ENCODE measurements at regions of chr2 and their contacts with region 1.

Region 1: GRCh38 chr2:191617575-191617974 is 60.4 kb upstream of the NABP1 start:
- DNase-seq: peak; percentile 78 to 89 (median 85)
- H3K4me3 ChIP-seq: no peak overlapping the region
- H3K4me3 Mint-ChIP-seq: peak overlapping the region; percentile 5 to 83 (median 34)
- H3K27ac ChIP-seq: peak overlapping the region; percentile 82
- H3K27ac Mint-ChIP-seq: peak overlapping the region; percentile 88 to 97 (median 93)
- H3K4me1 ChIP-seq: peaks cover 47% of the 10 kb centered on the region
- H3K4me1 Mint-ChIP-seq: peaks cover 35 to 52% (median 45%) of the 10 kb centered on the region in 4 donors
- H3K27me3 ChIP-seq: no peaks in the 10 kb centered on the region
- H3K27me3 Mint-ChIP-seq: no peaks in the 10 kb centered on the region

Region 2: GRCh38 chr2:191566344-191566743 is 51.2 kb before region 1 on chr2:
- CTCF ChIA-PET with region 1: interaction called, 8 read pairs
- POLR2A ChIA-PET with region 1: interaction called, 5 read pairs
- intact Hi-C with region 1: loop called (anchors 2 kb)
- DNase-seq: peak; percentile 47 to 63 (median 52)
- H3K4me3 ChIP-seq: no peak overlapping the region
- H3K4me3 Mint-ChIP-seq: no peak overlapping the region
- H3K27ac ChIP-seq: no peak overlapping the region
- H3K27ac Mint-ChIP-seq: no peak overlapping the region
- H3K4me1 ChIP-seq: peaks cover 19% of the 10 kb centered on the region
- H3K4me1 Mint-ChIP-seq: peaks cover 15 to 33% (median 25%) of the 10 kb centered on the region in 4 donors
- H3K27me3 ChIP-seq: peaks cover 3% of the 10 kb centered on the region
- H3K27me3 Mint-ChIP-seq: peaks cover 11 to 21% of the 10 kb centered on the region in 2 donors

Region 3: DNA sequence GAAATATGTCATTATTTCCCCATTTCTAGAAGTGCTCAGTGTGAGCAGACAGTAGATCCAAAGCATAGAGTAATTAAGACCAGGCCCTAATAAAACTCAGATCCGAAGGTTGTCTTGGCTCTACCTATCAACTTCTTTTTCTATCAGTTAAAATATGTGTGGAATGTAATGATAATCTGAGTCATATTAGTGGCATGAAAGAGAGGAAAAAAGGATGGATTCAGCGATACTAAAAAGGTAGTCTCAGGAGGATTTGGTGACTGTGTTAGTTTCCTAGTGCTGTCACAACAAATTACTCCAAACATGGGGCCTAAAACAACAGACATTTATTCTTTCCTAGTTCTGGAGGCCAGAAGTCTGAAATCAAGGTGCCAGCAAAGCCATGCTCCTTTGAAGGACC is 43.3 kb before region 1 on chr2:
- CTCF ChIA-PET with region 1: interaction called, 11 read pairs
- POLR2A ChIA-PET with region 1: interaction called, 5 read pairs
- intact Hi-C with region 1: loop called (anchors 2 kb)
- DNase-seq: no peak
- H3K4me3 ChIP-seq: no peak overlapping the region
- H3K4me3 Mint-ChIP-seq: no peak overlapping the region
- H3K27ac ChIP-seq: no peak overlapping the region
- H3K27ac Mint-ChIP-seq: no peak overlapping the region
- H3K4me1 ChIP-seq: peaks cover 21% of the 10 kb centered on the region
- H3K4me1 Mint-ChIP-seq: peaks cover 15 to 34% (median 23%) of the 10 kb centered on the region in 4 donors
- H3K27me3 ChIP-seq: no peaks in the 10 kb centered on the region
- H3K27me3 Mint-ChIP-seq: no peaks in the 10 kb centered on the region

Region 4: GRCh38 chr2:191637182-191638078 is 19.9 kb after region 1 on chr2:
- CTCF ChIA-PET with region 1: interaction called, 7 read pairs
- POLR2A ChIA-PET with region 1: interaction called, 76 read pairs
- intact Hi-C with region 1: loop called (anchors 2 kb)
- DNase-seq: peak; percentile 33 to 52 (median 39)
- H3K4me3 ChIP-seq: peak overlapping the region; percentile 0 to 7
- H3K4me3 Mint-ChIP-seq: peak overlapping the region; percentile 51 to 80 (median 70)
- H3K27ac ChIP-seq: peak overlapping the region; percentile 36
- H3K27ac Mint-ChIP-seq: peak overlapping the region; percentile 84 to 92 (median 86)
- H3K4me1 ChIP-seq: peaks cover 54% of the 10 kb centered on the region
- H3K4me1 Mint-ChIP-seq: peaks cover 48 to 68% (median 53%) of the 10 kb centered on the region in 4 donors
- H3K27me3 ChIP-seq: no peaks in the 10 kb centered on the region
- H3K27me3 Mint-ChIP-seq: no peaks in the 10 kb centered on the region

Region 5: DNA sequence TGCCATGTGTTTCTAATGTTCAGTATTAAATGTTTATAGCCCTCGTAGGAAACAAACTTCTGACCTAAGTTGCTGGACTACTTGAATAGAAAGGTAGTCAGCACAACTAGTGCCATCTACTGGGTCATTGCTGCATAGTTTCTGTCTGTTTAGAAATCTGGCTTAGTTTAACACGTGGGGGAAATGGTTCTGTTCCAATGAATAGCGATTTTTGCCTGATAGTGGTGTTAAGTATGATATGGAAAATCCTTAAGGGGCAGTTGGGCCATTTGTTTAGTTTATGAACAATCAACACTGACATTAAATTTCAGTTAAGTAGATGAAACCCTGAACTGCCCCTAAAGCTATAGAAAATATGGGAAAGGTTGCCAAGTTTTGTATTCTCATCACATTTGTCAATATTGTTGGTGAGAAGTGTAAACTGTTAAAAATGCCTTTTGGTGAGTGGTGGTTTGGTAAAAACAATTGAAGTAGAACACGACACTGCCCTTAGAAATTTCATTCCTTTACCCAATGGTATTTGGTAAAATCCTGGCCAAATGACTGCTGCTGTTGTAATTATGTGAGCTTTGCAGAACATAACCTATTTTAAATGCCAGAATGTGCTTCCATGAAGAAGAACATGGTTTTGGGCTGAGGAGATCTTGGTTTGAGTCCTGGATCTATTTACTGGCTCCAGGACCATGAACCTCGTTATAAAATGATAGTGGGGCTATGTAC is 73.6 kb after region 1 on chr2:
- CTCF ChIA-PET with region 1: interaction called, 8 read pairs
- POLR2A ChIA-PET with region 1: interaction called, 602 read pairs
- intact Hi-C with region 1: loop called (anchors 1 kb)
- DNase-seq: peak; percentile 61 to 67 (median 65)
- H3K4me3 ChIP-seq: no peak overlapping the region
- H3K4me3 Mint-ChIP-seq: no peak overlapping the region
- H3K27ac ChIP-seq: no peak overlapping the region
- H3K27ac Mint-ChIP-seq: peak overlapping the region; percentile 40 to 90 (median 73)
- H3K4me1 ChIP-seq: peaks cover 30% of the 10 kb centered on the region
- H3K4me1 Mint-ChIP-seq: peaks cover 20 to 46% (median 32%) of the 10 kb centered on the region in 4 donors
- H3K27me3 ChIP-seq: no peaks in the 10 kb centered on the region
- H3K27me3 Mint-ChIP-seq: no peaks in the 10 kb centered on the region

Region 6: DNA sequence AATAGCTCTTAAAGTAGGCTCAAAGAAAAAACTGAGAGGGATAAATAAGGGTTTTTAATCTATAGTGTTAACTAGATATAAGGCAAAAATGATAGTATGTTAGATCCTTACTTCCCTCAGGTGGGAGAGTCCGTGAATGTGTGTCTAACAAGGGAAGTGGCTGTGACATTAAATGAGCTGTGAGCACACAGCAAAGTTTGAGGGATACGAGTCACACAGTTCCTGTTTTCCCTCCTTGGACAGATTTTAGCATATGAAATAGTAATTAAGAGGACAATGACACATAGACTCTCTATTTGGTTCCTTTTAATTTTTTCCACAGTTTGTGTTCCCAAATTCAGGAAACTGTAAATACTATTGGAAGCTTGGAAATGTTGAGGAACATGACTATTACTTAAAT is 377.7 kb after region 1 on chr2:
- CTCF ChIA-PET with region 1: no interaction called
- POLR2A ChIA-PET with region 1: no interaction called
- intact Hi-C with region 1: no loop called
- DNase-seq: no peak
- H3K4me3 ChIP-seq: no peak overlapping the region
- H3K4me3 Mint-ChIP-seq: no peak overlapping the region
- H3K27ac ChIP-seq: no peak overlapping the region
- H3K27ac Mint-ChIP-seq: no peak overlapping the region
- H3K4me1 ChIP-seq: no peaks in the 10 kb centered on the region
- H3K4me1 Mint-ChIP-seq: no peaks in the 10 kb centered on the region
- H3K27me3 ChIP-seq: no peaks in the 10 kb centered on the region
- H3K27me3 Mint-ChIP-seq: no peaks in the 10 kb centered on the region

Measured in CD4-positive, alpha-beta memory T cell (primary cell).